Gastrocnemius medialis (tissue), 4 donors: ENCODE measurements at regions of chr5 and their contacts with region 1.

Region 1: DNA sequence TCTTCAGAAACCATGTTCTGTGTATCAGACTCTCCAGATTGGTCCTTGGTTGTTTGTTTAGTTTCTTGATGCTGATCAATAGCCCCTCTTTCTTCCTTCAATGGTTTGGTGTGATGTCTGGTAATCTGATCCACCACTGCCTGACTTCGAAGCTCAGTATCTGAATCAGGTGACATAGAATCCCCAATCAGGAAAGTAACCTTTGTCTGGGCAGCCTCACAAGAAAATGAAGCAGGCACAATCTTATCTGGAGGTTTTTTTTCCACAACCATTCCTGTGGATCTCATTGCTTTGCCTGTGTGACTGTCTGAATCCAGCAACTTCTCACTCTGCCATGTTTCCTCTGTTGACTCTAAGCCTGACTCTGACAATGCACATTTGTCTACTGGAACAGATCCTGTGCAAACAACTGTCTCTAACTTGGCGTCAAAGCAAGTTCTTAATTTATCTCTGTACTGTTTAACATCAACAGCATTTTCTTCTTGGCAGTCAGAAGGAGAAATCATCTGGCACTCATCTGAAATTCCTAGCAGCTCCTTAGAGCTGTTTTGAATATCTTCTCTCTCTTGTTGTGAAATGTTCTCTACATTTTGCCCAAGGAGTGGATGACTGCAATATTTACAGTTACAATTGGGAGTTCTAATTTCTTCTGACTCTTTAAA is 37.1 kb upstream of the RAPGEF6 start:
- DNase-seq: peak; percentile 43 to 50
- ATAC-seq: peak; percentile 88 to 93
- H3K4me3 ChIP-seq: peak overlapping the region in 2 of 4 donors; percentile 5 to 21
- H3K27ac ChIP-seq: peak overlapping the region; percentile 85 to 93 (median 88)
- H3K4me1 ChIP-seq: peaks cover 33 to 39% of the 10 kb centered on the region in 2 donors
- H3K27me3 ChIP-seq: no peaks in the 10 kb centered on the region
- CTCF ChIP-seq: no peak
- POLR2A ChIP-seq: no peak

Region 2: DNA sequence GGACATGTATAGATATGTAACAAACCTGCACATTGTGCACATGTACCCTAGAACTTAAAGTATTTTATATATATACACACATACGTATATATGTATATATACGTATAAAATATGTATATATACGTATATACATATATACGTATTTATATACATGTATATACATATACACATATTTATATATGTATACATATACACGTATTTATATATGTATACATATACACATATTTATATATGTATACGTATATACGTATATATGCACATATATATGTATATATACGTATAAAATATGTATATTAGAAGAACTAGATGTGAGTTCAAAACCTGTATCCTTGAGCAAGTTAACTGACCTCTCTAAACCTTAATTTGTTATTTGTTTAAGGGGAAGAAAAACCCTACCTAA is 63.3 kb after region 1 on chr5:
- in situ Hi-C with region 1: no loop called
- intact Hi-C with region 1: no loop called
- DNase-seq: no peak
- ATAC-seq: no peak
- H3K4me3 ChIP-seq: no peak overlapping the region
- H3K27ac ChIP-seq: no peak overlapping the region
- H3K4me1 ChIP-seq: no peaks in the 10 kb centered on the region
- H3K27me3 ChIP-seq: no peaks in the 10 kb centered on the region
- CTCF ChIP-seq: no peak
- POLR2A ChIP-seq: no peak

Region 3: GRCh38 chr5:131796793-131797693 is 124.9 kb after region 1 on chr5 and contains the start of gene FNIP1:
- in situ Hi-C with region 1: no loop called
- intact Hi-C with region 1: loop called (anchors 1 kb)
- DNase-seq: peak; percentile 100
- ATAC-seq: peak; percentile 83 to 85
- H3K4me3 ChIP-seq: peak within 1 kb of the TSS; percentile 84 to 93 (median 90)
- H3K27ac ChIP-seq: peak within 1 kb of the TSS; percentile 99
- H3K4me1 ChIP-seq: peaks cover 39 to 45% of the 10 kb centered on the region in 2 donors
- H3K27me3 ChIP-seq: no peaks in the 10 kb centered on the region
- CTCF ChIP-seq: peak in 2 of 5 experiments; percentile 2 to 27
- POLR2A ChIP-seq: peak; percentile 100
- total RNA-seq, gene FNIP1: 53.9 to 84.7 (median 66.9) TPM